PC-9 (cell line): ENCODE measurements at regions of chr1 and their contacts with region 1.

Region 1: GRCh38 chr1:156910309-156910782 is 10.1 kb upstream of the LRRC71 start:
- DNase-seq: no peak
- H3K4me3 ChIP-seq: no peak overlapping the region
- H3K27ac ChIP-seq: no peak overlapping the region
- H3K4me1 ChIP-seq: 0 out of 2 replicates have a peak, but pooled peaks cover 10% of the 10 kb centered on the region
- H3K27me3 ChIP-seq: no peaks in the 10 kb centered on the region
- CTCF ChIP-seq: peak; percentile 87

Region 2: DNA sequence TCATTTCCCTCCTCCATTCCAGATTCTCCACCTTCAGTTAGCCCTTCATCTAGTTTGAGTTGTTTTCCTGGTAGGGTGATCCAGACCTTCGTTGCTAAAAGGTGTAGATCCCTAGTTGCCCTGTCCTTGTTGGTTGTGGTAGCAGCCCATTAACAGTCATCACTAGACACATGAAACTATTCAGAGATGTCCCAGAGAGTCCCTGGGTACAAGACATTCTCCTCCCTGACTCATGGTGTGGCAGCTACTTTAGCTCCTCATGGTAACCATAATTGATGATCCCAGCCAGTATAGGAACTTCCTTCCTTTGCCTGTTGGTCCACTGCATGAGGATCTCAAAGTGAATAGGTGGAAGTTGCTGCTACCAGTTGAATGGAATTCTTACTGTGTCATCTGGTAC is 87.7 kb before region 1 on chr1:
- CTCF ChIA-PET with region 1: interaction called, 10 read pairs
- POLR2A ChIA-PET with region 1: no interaction called
- intact Hi-C with region 1: no loop called
- DNase-seq: no peak
- H3K4me3 ChIP-seq: no peak overlapping the region
- H3K27ac ChIP-seq: no peak overlapping the region
- H3K4me1 ChIP-seq: no peaks in the 10 kb centered on the region
- H3K27me3 ChIP-seq: no peaks in the 10 kb centered on the region
- CTCF ChIP-seq: no peak

Region 3: DNA sequence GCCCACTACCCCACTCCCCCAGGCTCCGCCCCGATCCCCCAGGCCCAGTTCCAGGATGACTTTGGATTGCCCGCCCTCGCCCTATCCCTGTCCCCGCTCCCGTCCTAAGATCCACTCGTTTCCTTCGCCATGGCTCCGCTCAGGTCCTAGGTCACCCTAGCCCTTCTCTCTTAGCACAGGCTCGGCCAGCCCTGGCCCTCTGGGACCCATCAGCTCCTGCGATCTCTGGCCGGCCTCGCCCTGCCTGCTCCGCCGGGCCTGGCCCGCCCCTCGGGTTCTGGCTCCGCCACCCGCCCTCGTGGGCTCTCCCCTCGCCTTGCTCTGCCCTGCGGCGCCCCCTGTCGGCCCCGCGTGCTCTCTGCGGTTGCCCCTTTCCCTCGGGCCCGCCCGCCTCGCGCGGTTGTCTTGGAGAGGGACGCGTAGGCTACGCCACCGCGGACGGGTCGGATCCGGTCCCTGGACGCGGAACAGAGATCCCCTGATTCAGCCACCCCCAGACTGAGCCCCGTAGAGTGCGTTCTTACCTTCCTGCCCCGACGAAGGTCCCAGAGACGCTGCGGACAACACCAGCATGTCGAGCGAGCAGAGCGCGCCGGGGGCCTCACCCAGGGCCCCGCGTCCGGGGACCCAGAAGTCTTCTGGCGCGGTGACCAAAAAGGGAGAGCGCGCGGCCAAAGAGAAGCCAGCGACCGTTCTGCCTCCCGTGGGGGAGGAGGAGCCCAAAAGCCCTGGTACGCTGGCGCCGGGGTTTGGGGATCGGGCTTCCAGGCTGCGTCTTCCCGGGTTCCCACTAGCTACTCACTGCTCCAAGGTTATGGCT is 10.1 kb after region 1 on chr1 and contains the start of gene LRRC71:
- CTCF ChIA-PET with region 1: interaction called, 22 read pairs
- POLR2A ChIA-PET with region 1: no interaction called
- intact Hi-C with region 1: no loop called
- DNase-seq: peak in 1 of 2 experiments; percentile 69
- H3K4me3 ChIP-seq: no peak within 1 kb of the TSS
- H3K27ac ChIP-seq: no peak within 1 kb of the TSS
- H3K4me1 ChIP-seq: peaks cover 21% of the 10 kb centered on the region; the same call in 1 of the 2 replicates
- H3K27me3 ChIP-seq: 0 out of 2 replicates have a peak, but pooled peaks cover 4% of the 10 kb centered on the region
- CTCF ChIP-seq: peak; percentile 39
- total RNA-seq, gene LRRC71: not detected in 2 replicates

Region 4: GRCh38 chr1:157000686-157001085 is 90.3 kb after region 1 on chr1:
- CTCF ChIA-PET with region 1: no interaction called
- POLR2A ChIA-PET with region 1: interaction called, 10 read pairs
- intact Hi-C with region 1: no loop called
- DNase-seq: peak; percentile 45 to 76
- H3K4me3 ChIP-seq: no peak overlapping the region
- H3K27ac ChIP-seq: no peak overlapping the region
- H3K4me1 ChIP-seq: peaks cover 13% of the 10 kb centered on the region; the same call in 1 of the 2 replicates
- H3K27me3 ChIP-seq: no peaks in the 10 kb centered on the region
- CTCF ChIP-seq: no peak